HEK293 (cell line): ENCODE measurements at regions of chr1 and their contacts with region 1.

Region 1: DNA sequence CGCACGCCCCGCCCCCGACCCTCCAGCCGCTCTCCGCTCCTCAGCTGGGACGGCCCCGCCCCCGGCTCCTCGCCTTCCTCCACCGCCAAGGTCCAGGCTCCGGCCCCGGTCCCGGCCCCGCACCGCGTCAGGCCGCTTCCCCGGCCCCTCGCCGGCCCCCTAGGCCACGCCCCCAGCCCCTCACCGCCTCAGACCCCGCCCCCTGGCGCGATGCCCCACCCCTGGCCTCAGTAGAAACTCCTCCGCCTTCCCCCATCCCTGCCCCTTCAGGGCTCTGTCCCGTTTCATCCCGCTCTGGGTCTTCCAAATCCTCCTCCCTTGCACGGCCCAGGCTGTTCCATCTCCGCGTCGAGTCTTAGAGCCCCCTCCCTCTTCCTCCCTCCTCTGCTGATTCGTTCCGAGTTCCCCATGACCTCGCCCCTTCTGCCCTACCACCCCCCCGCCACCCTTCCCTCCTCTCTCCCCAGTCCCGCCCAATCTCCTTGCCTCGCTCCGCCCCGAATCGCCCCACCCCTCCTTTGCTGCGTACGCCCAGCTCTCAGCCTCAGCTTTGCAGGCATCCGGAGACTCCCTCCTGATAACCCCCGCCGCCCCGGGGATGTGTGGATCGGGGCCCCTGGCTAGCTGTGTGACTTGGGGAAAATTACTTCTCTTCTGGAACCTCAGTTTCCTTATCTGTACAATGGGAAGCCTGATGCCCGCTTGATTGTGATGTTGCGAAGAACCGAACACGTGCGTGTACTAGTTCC is 448 bp upstream of the ASAP3 start:
- H3K4me3 ChIP-seq: peak overlapping the region; percentile 63
- H3K27ac ChIP-seq: no peak overlapping the region
- H3K4me1 ChIP-seq: no peaks in the 10 kb centered on the region
- CTCF ChIP-seq: no peak

Region 2: DNA sequence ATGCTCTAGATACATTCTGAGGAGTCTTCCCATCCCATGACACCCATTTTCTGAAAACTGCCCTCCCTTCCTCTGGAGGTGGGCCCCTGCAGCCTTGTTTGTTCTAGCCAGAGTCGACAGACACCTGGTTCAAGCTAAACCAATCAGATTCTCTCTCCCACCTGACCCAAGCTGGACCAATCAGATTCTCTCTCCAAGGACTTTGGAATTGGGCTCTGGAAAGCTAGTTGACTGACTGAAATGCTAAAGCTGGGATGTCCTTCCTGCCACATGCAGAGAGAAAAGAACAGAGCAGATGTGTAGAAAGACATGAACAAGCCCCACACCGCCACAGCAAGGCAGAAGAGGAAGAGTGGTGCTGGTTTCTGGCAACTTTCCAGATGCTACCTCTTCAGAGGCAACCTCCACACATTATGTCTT is 25.1 kb before region 1 on chr1:
- CTCF ChIA-PET with region 1: no interaction called
- POLR2A ChIA-PET with region 1: no interaction called
- H3K4me3 ChIP-seq: no peak overlapping the region
- H3K27ac ChIP-seq: no peak overlapping the region
- H3K4me1 ChIP-seq: no peaks in the 10 kb centered on the region
- CTCF ChIP-seq: no peak

Region 3: DNA sequence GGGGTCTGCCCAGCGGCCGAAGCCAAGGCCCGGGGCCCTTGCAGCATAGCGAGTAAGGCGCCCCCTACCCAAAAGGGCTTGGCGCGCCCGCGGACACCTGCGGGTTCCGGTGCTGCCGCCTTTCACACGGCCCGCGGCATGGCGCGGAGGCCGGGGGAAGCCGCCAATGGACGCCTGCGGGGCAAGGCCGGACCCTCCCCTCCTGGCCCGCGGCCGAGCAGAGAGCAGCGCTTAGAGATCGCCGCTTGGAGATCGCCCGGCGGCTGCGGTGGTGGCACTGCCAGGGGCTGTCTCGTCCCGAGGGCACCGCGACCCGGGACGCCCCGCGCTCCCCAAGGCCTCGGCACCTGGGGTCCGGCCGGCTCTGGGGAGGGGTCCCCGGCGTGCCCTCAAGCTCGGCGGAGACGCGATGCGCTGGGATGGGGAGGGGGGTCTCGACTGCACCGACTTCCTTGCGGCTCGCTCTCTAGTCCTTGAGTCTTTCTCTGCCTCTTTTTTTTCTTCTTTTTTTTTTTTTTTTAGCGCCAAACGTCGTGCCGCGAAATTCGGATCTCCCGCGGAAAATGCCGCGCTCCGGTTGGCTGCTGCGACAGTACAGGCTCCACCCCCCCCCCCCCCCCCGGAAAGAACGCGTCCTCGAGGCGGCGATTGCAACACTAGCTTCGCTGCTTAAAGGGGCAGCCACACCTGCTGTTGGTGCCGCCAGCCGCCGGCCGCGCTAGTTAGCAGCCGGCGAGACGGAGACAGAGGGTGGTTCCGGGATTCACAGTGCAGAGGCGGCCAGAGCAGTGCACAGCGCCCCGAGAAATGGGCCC is 46.5 kb after region 1 on chr1 and contains the start of gene E2F2:
- CTCF ChIA-PET with region 1: interaction called, 3 read pairs
- POLR2A ChIA-PET with region 1: interaction called, 10 read pairs
- H3K4me3 ChIP-seq: peak within 1 kb of the TSS; percentile 69
- H3K27ac ChIP-seq: peak within 1 kb of the TSS; percentile 89
- H3K4me1 ChIP-seq: peaks cover 2% of the 10 kb centered on the region; the same call in 1 of the 2 replicates
- CTCF ChIP-seq: peak; percentile 84

Region 4: GRCh38 chr1:23539698-23540266 is 55.4 kb after region 1 on chr1:
- CTCF ChIA-PET with region 1: interaction called, 11 read pairs
- POLR2A ChIA-PET with region 1: interaction called, 5 read pairs
- H3K4me3 ChIP-seq: no peak overlapping the region
- H3K27ac ChIP-seq: no peak overlapping the region
- H3K4me1 ChIP-seq: no peaks in the 10 kb centered on the region
- CTCF ChIP-seq: peak; percentile 95

Region 5: GRCh38 chr1:23627069-23627735 is 142.8 kb after region 1 on chr1:
- CTCF ChIA-PET with region 1: no interaction called
- POLR2A ChIA-PET with region 1: no interaction called
- H3K4me3 ChIP-seq: no peak overlapping the region
- H3K27ac ChIP-seq: no peak overlapping the region
- H3K4me1 ChIP-seq: no peaks in the 10 kb centered on the region
- CTCF ChIP-seq: no peak